ENCODE measurements at regions of chr9 and their contacts with region 1.

Region 1: GRCh38 chr9:129202613-129203555 is 24.8 kb upstream of the IER5L start:
- DNase-seq: peak; percentile 93
- H3K4me3 ChIP-seq: peak overlapping the region; percentile 40 to 70 (median 63)
- H3K27ac ChIP-seq: peak overlapping the region; percentile 86 to 91 (median 88)
- H3K4me1 ChIP-seq: peaks cover 0 to 15% (median 10%) of the 10 kb centered on the region in 4 donors
- H3K27me3 ChIP-seq: no peaks in the 10 kb centered on the region
- CTCF ChIP-seq: no peak
- EP300 ChIP-seq: no peak
- POLR2A ChIP-seq: peak; percentile 45 to 46

Region 2: DNA sequence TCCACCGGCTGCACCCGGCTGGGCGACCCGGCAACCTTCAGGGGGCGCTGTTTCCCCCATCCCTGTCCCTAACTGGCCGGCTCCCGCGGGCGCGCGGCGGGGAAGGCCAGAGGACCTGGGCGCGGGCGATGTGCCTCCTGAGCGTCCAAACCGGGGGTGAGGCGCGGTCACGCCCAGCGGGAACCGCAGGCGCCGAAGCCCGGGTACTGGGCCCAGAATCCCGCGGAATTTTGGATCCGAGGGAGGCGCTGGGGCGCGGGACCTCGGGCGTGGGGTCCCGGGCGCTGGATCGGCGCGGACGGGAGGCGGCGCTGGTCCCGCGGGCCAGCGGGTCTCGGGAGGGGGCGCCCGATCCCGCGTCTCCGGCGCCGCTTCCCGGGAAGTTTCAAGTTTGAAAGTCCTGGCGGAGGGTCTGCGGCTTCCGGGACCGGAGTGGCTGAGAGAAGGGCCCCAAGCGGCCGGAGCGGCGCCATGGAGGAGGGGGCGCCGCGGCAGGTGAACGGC is 500.4 kb before region 1 on chr9 and contains the start of gene PKN3:
- intact Hi-C with region 1: no loop called
- DNase-seq: peak; percentile 91
- H3K4me3 ChIP-seq: peak within 1 kb of the TSS; percentile 65 to 82 (median 76)
- H3K27ac ChIP-seq: peak within 1 kb of the TSS; percentile 69 to 84 (median 76)
- H3K4me1 ChIP-seq: peaks cover 0 to 19% (median 13%) of the 10 kb centered on the region in 4 donors
- H3K27me3 ChIP-seq: no peaks in the 10 kb centered on the region
- CTCF ChIP-seq: peak; percentile 69 to 92 (median 76)
- EP300 ChIP-seq: no peak
- POLR2A ChIP-seq: no peak
- total RNA-seq, gene PKN3: 1.6 to 5.5 (median 3.1) TPM

Region 3: GRCh38 chr9:129139993-129140396 is 62.9 kb before region 1 on chr9:
- intact Hi-C with region 1: loop called (anchors 2 kb)
- DNase-seq: peak; percentile 98
- H3K4me3 ChIP-seq: peak overlapping the region; percentile 36 to 59 (median 50)
- H3K27ac ChIP-seq: peak overlapping the region; percentile 97 to 100 (median 99)
- H3K4me1 ChIP-seq: peaks cover 0 to 73% (median 64%) of the 10 kb centered on the region in 4 donors
- H3K27me3 ChIP-seq: no peaks in the 10 kb centered on the region
- CTCF ChIP-seq: no peak
- EP300 ChIP-seq: peak in 2 of 4 donors; percentile 71 to 76
- POLR2A ChIP-seq: peak; percentile 55 to 62

Region 4: DNA sequence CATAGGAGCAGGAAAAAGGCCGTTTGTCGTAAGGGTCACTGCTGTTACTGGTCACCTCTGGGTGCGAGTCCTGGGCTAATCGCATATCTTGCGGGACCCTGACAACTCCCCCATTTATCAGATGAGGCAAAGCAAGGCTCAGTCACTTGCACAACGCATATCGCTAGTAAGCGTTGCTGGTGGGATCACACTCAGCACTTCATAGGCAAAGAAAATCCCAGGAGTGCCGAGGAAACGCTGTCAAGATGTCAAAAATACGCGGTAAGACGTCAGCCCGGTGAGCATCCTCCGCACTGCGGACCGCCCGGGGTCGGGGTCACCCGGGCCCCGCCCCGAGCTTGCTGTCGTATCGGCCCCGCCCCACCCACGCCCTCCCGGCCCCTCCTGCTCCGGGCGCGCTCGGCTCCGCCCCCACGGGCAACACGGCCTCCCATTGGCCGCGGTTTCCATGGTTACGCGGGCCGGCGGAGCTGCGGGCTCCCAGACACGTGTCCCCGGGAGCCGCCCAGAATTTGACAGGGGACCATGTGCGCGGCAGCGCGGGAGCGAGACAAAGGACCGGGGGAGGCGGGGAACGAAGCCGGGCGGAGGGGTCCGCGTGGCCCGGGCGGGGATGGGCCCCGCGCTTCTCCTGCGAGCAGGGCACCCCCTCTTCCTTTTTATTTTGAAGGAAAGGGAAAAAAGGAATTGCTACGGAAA is 55.4 kb after region 1 on chr9:
- intact Hi-C with region 1: loop called (anchors 10 kb)
- DNase-seq: peak; percentile 95
- H3K4me3 ChIP-seq: peak overlapping the region in 3 of 4 donors; percentile 22 to 33 (median 28)
- H3K27ac ChIP-seq: peak overlapping the region in 1 of 4 donors; percentile 23
- H3K4me1 ChIP-seq: peaks cover 0 to 29% (median 27%) of the 10 kb centered on the region in 4 donors
- H3K27me3 ChIP-seq: peaks cover 0 to 14% (median 0%) of the 10 kb centered on the region in 3 donors
- CTCF ChIP-seq: no peak
- EP300 ChIP-seq: no peak
- POLR2A ChIP-seq: no peak

Region 5: GRCh38 chr9:129317179-129318011 is 114.5 kb after region 1 on chr9:
- intact Hi-C with region 1: no loop called
- DNase-seq: peak; percentile 75
- H3K4me3 ChIP-seq: no peak overlapping the region
- H3K27ac ChIP-seq: peak overlapping the region; percentile 75 to 87 (median 82)
- H3K4me1 ChIP-seq: peaks cover 0 to 49% (median 43%) of the 10 kb centered on the region in 4 donors
- H3K27me3 ChIP-seq: no peaks in the 10 kb centered on the region
- CTCF ChIP-seq: no peak
- EP300 ChIP-seq: no peak
- POLR2A ChIP-seq: no peak

Region 6: DNA sequence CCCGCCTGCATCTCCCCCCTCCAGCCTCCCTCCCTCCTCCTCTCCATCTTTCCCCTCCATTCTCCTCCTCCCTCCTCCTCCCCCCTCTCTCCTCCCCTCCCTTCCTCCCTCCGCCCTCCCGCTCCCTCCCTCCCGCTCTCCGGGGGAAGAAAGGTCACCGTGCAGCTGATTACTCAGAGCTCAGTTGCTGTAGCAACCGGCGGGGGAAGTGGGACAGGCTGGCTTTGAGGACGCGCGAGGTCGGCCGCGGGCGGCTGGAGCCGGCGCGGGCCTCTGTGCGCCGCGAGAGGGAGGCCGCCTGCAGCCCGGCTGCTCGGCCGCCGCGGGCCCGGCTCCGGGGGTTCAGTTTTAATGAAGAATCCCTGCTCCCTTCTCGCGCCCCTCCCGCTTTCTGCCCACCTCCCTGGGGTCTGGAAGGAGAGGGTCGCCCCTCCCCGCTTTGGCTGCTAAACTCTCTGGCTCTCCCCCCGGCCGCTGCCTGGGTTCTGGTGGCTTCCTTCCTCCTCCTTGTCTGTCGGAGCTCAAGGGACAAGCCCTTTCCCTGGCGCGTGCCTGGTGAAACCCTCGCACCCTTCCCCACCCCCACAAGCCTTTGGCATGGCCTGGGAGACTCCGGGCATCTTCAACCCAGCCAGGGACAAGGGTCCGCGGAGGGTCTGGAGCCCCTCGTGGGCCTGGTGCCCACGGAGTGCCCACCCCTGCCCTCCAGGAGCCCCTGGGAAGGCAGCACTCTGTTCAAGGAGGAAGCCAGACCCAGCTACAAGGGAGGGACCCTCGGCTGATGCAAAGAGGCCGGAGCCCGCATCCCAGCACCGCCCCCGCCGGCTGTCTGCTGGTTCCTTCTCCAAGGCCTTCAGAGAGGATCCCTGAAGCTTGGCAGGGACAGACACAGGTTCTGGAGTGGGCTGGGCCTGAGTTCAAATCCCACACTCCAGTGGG is 257.7 kb after region 1 on chr9:
- intact Hi-C with region 1: loop called (anchors 5 kb)
- DNase-seq: peak; percentile 99
- H3K4me3 ChIP-seq: peak overlapping the region; percentile 19 to 46 (median 46)
- H3K27ac ChIP-seq: peak overlapping the region; percentile 95 to 100 (median 98)
- H3K4me1 ChIP-seq: peaks cover 0 to 68% (median 54%) of the 10 kb centered on the region in 4 donors
- H3K27me3 ChIP-seq: no peaks in the 10 kb centered on the region
- CTCF ChIP-seq: peak in 1 of 4 experiments; percentile 23
- EP300 ChIP-seq: peak in 2 of 4 donors; percentile 53 to 72
- POLR2A ChIP-seq: peak in 1 of 2 donors; percentile 42

Measured in sigmoid colon (tissue), 7 donors.